K562 (cell line): ENCODE measurements at regions of chr2 and their contacts with region 1.

Region 1: DNA sequence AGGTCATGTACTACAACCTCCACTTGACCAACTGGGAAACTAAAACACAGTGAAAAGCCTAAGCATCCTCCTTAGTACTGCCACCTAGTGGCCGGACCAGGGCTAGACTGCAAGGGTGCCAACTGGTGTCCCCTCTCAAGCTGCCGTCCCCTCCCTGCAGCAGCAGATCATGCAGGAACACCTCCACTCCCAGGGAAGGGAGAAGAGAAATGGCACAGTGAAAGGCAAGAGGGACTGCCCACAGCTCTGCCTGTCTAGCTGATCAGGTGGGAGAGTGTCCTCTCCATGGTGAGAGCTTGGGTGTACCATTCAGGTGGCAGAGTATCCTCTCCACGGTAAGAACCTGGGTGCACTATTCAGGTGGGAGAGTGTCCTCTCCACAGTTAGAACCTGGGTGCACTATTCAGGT is 78.1 kb downstream of the AAK1 start:
- DNase-seq: peak; percentile 78 to 83 (median 81)
- ATAC-seq: peak; percentile 97
- H3K4me3 ChIP-seq: no peak overlapping the region
- H3K27ac ChIP-seq: no peak overlapping the region
- H3K4me1 ChIP-seq: no peaks in the 10 kb centered on the region; a peak in 2 of 5 replicates
- H3K27me3 ChIP-seq: no peaks in the 10 kb centered on the region
- CTCF ChIP-seq: peak; percentile 81 to 94 (median 83)
- EP300 ChIP-seq: no peak
- POLR2A ChIP-seq: no peak
- RAD21 ChIP-seq: peak; percentile 38 to 61; a peak in 3 of 4 replicates

Region 2: DNA sequence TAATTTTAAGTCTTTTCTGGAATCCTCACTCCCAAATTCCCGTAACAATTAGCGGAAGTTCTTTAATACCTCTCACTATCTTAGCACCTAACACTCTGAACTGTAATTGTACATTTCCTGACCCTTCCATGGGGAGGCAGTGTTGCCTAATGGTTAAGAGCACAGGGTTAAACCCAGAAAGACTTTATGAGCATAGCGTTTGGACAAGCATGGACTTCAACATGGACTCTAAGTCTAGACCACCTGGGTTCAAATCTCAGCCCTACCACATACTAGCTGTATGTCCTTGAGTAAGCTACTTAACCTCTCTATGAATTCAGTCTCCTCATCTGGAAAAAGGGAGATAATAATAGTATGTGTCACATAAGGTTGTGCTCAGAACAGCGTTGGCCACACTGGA is 539.4 kb before region 1 on chr2:
- CTCF ChIA-PET with region 1: no interaction called
- POLR2A ChIA-PET with region 1: no interaction called
- in situ Hi-C with region 1: no loop called
- intact Hi-C with region 1: loop called (anchors 10 kb)
- DNase-seq: peak; percentile 39 to 68 (median 51)
- ATAC-seq: peak; percentile 92
- H3K4me3 ChIP-seq: no peak overlapping the region
- H3K27ac ChIP-seq: no peak overlapping the region
- H3K4me1 ChIP-seq: no peaks in the 10 kb centered on the region
- H3K27me3 ChIP-seq: no peaks in the 10 kb centered on the region
- CTCF ChIP-seq: peak; percentile 58 to 83 (median 67)
- EP300 ChIP-seq: no peak
- POLR2A ChIP-seq: no peak
- RAD21 ChIP-seq: peak; percentile 93 to 95

Region 3: GRCh38 chr2:69436938-69437750 is 128.3 kb before region 1 on chr2 and contains the start of gene NFU1:
- CTCF ChIA-PET with region 1: no interaction called
- POLR2A ChIA-PET with region 1: interaction called, 5 read pairs
- in situ Hi-C with region 1: no loop called
- intact Hi-C with region 1: loop called (anchors 2 kb)
- DNase-seq: peak; percentile 97 to 98 (median 97)
- ATAC-seq: peak; percentile 99
- H3K4me3 ChIP-seq: peak within 1 kb of the TSS; percentile 75
- H3K27ac ChIP-seq: peak within 1 kb of the TSS; percentile 96
- H3K4me1 ChIP-seq: peaks cover 15 to 16% of the 10 kb centered on the region in 2 experiments; a peak in 4 of 5 replicates
- H3K27me3 ChIP-seq: no peaks in the 10 kb centered on the region
- CTCF ChIP-seq: peak; percentile 72 to 78 (median 75)
- EP300 ChIP-seq: no peak
- POLR2A ChIP-seq: peak; percentile 95
- RAD21 ChIP-seq: peak; percentile 6 to 46; a peak in 3 of 4 replicates
- polyA plus RNA-seq, gene NFU1: 33.9 to 59.4 TPM

Region 4: GRCh38 chr2:69464575-69464974 is 100.9 kb before region 1 on chr2:
- CTCF ChIA-PET with region 1: no interaction called
- POLR2A ChIA-PET with region 1: no interaction called
- in situ Hi-C with region 1: no loop called
- intact Hi-C with region 1: no loop called
- DNase-seq: peak in 2 of 4 experiments; percentile 9 to 12
- ATAC-seq: peak; percentile 79
- H3K4me3 ChIP-seq: no peak overlapping the region
- H3K27ac ChIP-seq: no peak overlapping the region
- H3K4me1 ChIP-seq: no peaks in the 10 kb centered on the region
- H3K27me3 ChIP-seq: no peaks in the 10 kb centered on the region
- CTCF ChIP-seq: no peak
- EP300 ChIP-seq: no peak
- POLR2A ChIP-seq: no peak
- RAD21 ChIP-seq: no peak

Region 5: GRCh38 chr2:69531186-69531585 is 34.2 kb before region 1 on chr2:
- CTCF ChIA-PET with region 1: no interaction called
- POLR2A ChIA-PET with region 1: no interaction called
- in situ Hi-C with region 1: no loop called
- intact Hi-C with region 1: no loop called
- DNase-seq: no peak
- ATAC-seq: no peak
- H3K4me3 ChIP-seq: no peak overlapping the region
- H3K27ac ChIP-seq: no peak overlapping the region
- H3K4me1 ChIP-seq: no peaks in the 10 kb centered on the region
- H3K27me3 ChIP-seq: no peaks in the 10 kb centered on the region
- CTCF ChIP-seq: no peak
- EP300 ChIP-seq: no peak
- POLR2A ChIP-seq: no peak
- RAD21 ChIP-seq: no peak

Region 6: DNA sequence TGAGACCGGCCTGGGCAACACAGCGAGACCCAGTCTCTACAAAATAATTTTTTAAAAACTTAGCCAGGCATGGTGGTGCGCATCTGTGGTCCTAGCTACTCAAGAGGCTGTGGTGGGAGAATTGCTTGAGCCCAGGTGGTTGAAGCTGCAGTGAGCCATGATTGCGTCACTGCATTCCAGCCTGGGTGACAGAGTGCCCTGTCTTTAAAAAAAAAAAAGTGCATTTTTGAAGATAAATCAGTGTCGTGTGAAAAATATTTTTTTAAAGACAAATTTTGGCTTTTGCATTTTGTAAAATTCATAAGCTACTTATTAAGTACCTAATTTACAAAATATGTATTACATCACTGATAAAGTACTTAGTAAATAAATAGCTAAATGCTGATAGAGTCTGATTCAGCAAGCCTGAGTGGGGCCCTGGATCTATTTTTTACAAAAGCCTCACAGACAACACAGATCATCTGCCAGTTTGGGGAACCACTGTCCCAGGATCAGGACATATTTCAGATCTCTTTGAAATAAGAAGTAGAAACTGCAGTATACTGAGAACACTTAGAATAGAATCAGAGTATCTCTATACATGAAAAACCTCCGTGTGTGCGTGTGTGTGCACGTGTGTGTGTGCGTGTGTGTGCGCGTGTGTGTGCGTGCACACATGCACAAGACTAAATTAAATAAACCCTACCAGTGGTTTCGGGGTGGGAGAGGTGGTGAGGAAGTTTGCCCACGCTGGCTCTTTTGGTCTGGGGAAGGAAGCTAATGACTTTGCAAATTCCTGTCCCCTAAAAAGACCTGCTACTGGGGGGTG is 16.5 kb after region 1 on chr2:
- CTCF ChIA-PET with region 1: no interaction called
- POLR2A ChIA-PET with region 1: interaction called, 23 read pairs
- in situ Hi-C with region 1: no loop called
- intact Hi-C with region 1: no loop called
- DNase-seq: peak in 2 of 4 experiments; percentile 39 to 44
- ATAC-seq: peak; percentile 56
- H3K4me3 ChIP-seq: no peak overlapping the region
- H3K27ac ChIP-seq: peak overlapping the region; percentile 52
- H3K4me1 ChIP-seq: peaks cover 4 to 25% of the 10 kb centered on the region in 2 experiments; a peak in 4 of 5 replicates
- H3K27me3 ChIP-seq: no peaks in the 10 kb centered on the region
- CTCF ChIP-seq: no peak
- EP300 ChIP-seq: no peak
- POLR2A ChIP-seq: no peak
- RAD21 ChIP-seq: no peak

Region 7: GRCh38 chr2:69683101-69683971 is 117.9 kb after region 1 on chr2:
- CTCF ChIA-PET with region 1: no interaction called
- POLR2A ChIA-PET with region 1: no interaction called
- in situ Hi-C with region 1: no loop called
- intact Hi-C with region 1: no loop called
- DNase-seq: peak; percentile 38 to 66 (median 40)
- ATAC-seq: peak; percentile 75
- H3K4me3 ChIP-seq: no peak overlapping the region
- H3K27ac ChIP-seq: peak overlapping the region; percentile 67; the same call in 2 of the 3 replicates
- H3K4me1 ChIP-seq: peaks cover 0 to 23% of the 10 kb centered on the region in 2 experiments; a peak in 3 of 5 replicates
- H3K27me3 ChIP-seq: no peaks in the 10 kb centered on the region
- CTCF ChIP-seq: no peak
- EP300 ChIP-seq: peak; percentile 86
- POLR2A ChIP-seq: no peak
- RAD21 ChIP-seq: no peak

Region 8: DNA sequence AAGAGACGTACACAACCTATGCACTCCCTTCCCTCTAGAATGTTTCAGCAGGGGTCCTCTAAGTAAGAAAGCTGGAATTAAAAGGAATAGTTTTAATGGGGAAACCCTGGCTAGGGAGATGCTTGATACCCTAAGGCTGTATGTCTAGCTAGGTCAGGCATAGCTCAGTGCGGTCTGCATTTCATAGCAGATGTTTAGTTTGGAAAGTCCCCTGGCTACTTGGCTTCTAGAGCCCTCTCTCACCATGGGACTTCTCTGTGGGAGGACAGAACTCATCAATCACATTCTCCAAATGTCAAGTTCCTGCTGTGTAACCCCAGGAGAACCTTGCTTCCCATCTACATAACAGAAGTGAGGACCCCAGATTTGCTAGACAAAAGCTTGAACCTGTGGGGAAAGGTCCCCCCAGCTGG is 152.4 kb after region 1 on chr2:
- CTCF ChIA-PET with region 1: interaction called, 33 read pairs
- POLR2A ChIA-PET with region 1: no interaction called
- in situ Hi-C with region 1: loop called (anchors 5 kb)
- intact Hi-C with region 1: no loop called
- DNase-seq: no peak
- ATAC-seq: no peak
- H3K4me3 ChIP-seq: no peak overlapping the region
- H3K27ac ChIP-seq: no peak overlapping the region
- H3K4me1 ChIP-seq: peaks cover 0 to 8% of the 10 kb centered on the region in 2 experiments; a peak in 2 of 5 replicates
- H3K27me3 ChIP-seq: no peaks in the 10 kb centered on the region
- CTCF ChIP-seq: no peak
- EP300 ChIP-seq: no peak
- POLR2A ChIP-seq: no peak
- RAD21 ChIP-seq: no peak

Region 9: GRCh38 chr2:70301344-70302194 is 736.1 kb after region 1 on chr2 and contains the start of gene FAM136A:
- CTCF ChIA-PET with region 1: no interaction called
- POLR2A ChIA-PET with region 1: no interaction called
- in situ Hi-C with region 1: no loop called
- intact Hi-C with region 1: no loop called
- DNase-seq: peak; percentile 91 to 96 (median 93)
- ATAC-seq: peak; percentile 96
- H3K4me3 ChIP-seq: peak within 1 kb of the TSS; percentile 55
- H3K27ac ChIP-seq: peak within 1 kb of the TSS; percentile 87
- H3K4me1 ChIP-seq: peaks cover 6 to 14% of the 10 kb centered on the region in 2 experiments; a peak in 4 of 5 replicates
- H3K27me3 ChIP-seq: peaks cover 0 to 5% of the 10 kb centered on the region in 2 experiments; a peak in 2 of 5 replicates
- CTCF ChIP-seq: peak; percentile 81 to 94 (median 89)
- EP300 ChIP-seq: no peak
- POLR2A ChIP-seq: peak; percentile 88
- RAD21 ChIP-seq: peak; percentile 62 to 77; a peak in 3 of 4 replicates
- polyA plus RNA-seq, gene FAM136A: 125 to 151 TPM